ENCODE measurements at regions of chr20 and their contacts with region 1.

Region 1: GRCh38 chr20:64101731-64102621 is 5.4 kb downstream of the NPBWR2 start:
- DNase-seq: peak; percentile 85
- CTCF ChIP-seq: peak; percentile 81

Region 2: GRCh38 chr20:63894358-63895201 is 207.4 kb before region 1 on chr20 and contains the start of gene DNAJC5:
- CTCF ChIA-PET with region 1: no interaction called
- POLR2A ChIA-PET with region 1: no interaction called
- DNase-seq: peak; percentile 100
- CTCF ChIP-seq: no peak

Region 3: GRCh38 chr20:64079273-64080012 is 22.5 kb before region 1 on chr20 and contains the start of gene RGS19:
- CTCF ChIA-PET with region 1: interaction called, 12 read pairs
- POLR2A ChIA-PET with region 1: no interaction called
- DNase-seq: peak; percentile 92
- CTCF ChIP-seq: no peak